AG04450 (cell line): ENCODE measurements at regions of chr11 and their contacts with region 1.

Region 1: GRCh38 chr11:47631473-47631872 is 10.9 kb downstream of the MTCH2 start:
- DNase-seq: no peak
- H3K4me3 ChIP-seq: no peak overlapping the region
- H3K27ac ChIP-seq: no peak overlapping the region
- H3K27me3 ChIP-seq: no peaks in the 10 kb centered on the region
- CTCF ChIP-seq: no peak

Region 2: GRCh38 chr11:47766305-47767227 is 135.1 kb after region 1 on chr11:
- CTCF ChIA-PET with region 1: interaction called, 11 read pairs
- POLR2A ChIA-PET with region 1: no interaction called
- DNase-seq: no peak
- H3K4me3 ChIP-seq: peak overlapping the region; percentile 86
- H3K27ac ChIP-seq: peak overlapping the region; percentile 85
- H3K27me3 ChIP-seq: no peaks in the 10 kb centered on the region
- CTCF ChIP-seq: no peak

Region 3: DNA sequence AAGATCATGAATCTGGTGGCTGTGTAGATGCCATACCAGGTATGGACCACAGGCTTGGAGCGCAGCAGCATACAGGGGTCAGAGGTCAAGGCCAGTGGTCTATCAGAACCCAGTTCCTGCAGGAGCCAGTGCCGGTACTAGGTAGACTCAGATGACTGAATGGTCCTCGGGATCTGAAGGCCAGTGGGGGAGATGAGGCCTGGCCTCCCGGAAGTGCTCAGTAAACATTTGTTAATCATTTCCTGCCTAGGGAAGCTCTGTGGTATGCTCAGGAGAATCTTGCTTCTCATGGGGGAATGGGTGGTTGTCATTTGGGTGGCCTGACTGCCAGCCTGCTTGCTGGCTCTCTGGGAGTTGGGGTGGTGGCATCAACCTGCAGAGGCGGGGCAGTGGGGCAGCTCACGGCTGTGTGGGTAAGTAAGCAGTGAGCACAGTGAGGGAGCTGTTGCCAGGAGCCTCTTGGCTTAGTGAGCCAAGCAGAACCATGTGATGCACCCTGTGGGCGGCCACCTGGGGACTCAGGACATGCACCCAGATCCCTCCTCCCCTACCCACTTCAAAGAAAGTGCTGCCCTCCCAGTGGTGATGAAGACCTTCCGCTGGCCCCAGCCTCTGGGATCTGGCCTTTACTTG is 381.9 kb after region 1 on chr11:
- CTCF ChIA-PET with region 1: no interaction called
- POLR2A ChIA-PET with region 1: no interaction called
- DNase-seq: no peak
- H3K4me3 ChIP-seq: no peak overlapping the region
- H3K27ac ChIP-seq: peak overlapping the region; percentile 11
- H3K27me3 ChIP-seq: no peaks in the 10 kb centered on the region
- CTCF ChIP-seq: no peak